GM18951 (cell line): ENCODE measurements at regions of chr3 and their contacts with region 1.

Region 1: DNA sequence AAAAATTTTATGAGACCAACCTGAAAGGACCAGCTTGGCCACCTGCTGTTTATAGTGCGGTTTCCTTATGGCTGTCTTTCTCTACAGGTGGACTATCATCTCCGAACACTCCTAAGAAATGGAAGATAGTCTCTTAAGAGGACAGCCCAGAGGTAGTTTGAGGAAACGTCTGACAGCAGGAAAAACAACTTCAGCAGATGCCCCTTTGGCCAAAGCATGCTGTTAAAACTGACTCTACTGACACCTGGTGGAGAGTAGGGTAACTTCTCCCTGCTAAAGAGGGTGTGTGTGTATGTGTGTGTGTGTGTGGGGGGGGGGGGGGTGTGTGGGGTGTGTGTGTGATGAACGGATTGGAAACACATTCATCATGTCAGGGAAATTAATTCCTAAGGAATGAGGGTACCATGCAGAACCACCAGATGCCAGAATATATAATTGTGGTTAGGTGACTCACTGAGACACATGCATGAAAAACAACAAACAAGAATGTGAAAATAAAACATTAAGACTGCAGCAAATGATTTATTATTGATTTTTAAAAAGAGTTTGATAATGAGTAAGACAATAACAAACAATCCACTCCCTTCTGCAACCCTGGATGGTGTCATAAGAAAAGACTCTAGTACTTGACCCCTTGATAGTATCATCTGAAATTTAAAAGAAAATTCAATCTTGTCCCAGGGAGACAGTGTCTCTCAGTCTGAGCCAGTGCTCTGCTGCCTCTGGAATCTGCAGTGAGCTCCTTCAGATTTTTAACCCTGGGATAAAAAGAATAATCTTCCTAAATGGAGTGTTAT is 256.5 kb downstream of the THRB start:
- POLR2A ChIP-seq: no peak

Region 2: GRCh38 chr3:23888617-23889228 is 349.4 kb before region 1 on chr3:
- in situ Hi-C with region 1: loop called (anchors 25 kb)
- POLR2A ChIP-seq: no peak

Region 3: GRCh38 chr3:24004171-24004938 is 233.8 kb before region 1 on chr3:
- in situ Hi-C with region 1: loop called (anchors 10 kb)
- POLR2A ChIP-seq: no peak